ENCODE measurements at regions of chr3 and their contacts with region 1.

Region 1: DNA sequence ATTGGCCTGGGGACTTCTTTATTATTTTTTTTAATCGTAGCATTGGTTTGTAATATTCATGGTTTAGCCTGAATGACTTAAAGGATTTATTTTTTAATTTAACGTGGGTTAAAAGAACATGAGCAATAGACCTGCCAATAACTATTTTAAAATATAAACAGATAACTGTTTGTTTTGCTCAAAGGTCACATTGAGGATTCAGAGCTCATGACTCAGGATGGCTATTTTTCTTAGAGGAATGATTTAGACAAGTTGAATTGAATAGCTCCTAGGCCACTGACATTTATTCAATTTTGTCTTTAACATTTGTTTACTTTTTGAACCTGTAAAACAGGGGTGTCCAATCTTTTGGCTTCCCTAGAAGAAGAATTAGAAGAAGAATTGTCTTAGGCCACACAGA is 68.5 kb downstream of the ITPR1 start:
- DNase-seq: no peak
- ATAC-seq: no peak
- H3K4me3 Mint-ChIP-seq: no peak overlapping the region
- H3K27ac Mint-ChIP-seq: no peak overlapping the region
- H3K4me1 Mint-ChIP-seq: peaks cover 29% of the 10 kb centered on the region
- H3K27me3 Mint-ChIP-seq: no peaks in the 10 kb centered on the region
- CTCF ChIP-seq: no peak

Region 2: DNA sequence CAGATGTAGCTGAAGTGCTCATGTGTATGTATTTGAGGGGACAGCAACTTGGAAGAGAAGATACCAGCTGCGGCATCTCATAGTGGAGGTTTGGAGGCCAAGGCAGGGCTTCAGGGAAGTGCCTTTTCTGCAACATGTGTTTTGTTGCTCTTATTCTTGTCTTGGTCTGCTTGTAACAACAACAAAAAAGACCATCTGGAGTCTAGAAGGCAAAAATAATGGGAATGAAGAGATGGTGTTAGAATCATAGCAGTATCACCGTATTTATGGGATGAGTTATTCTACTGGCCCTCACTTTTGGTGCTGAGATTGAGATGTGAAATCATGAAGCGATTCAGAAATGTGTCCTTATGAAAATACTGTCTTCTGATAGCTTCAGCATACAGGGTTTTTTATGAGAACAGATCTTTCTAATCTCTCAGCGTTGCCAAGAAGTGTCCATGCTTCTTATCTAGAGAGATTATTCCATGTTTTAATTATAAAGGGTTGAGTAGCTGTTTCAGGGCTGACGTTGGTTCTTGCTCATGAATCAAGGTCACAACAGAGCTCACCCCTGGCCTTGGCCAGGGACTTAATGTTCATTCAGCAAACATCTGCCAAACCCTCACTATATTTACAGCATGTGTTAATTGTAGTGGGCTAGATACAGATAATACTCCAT is 10.5 kb before region 1 on chr3:
- CTCF ChIA-PET with region 1: no interaction called
- POLR2A ChIA-PET with region 1: no interaction called
- intact Hi-C with region 1: loop called (anchors 2 kb)
- DNase-seq: no peak
- ATAC-seq: no peak
- H3K4me3 Mint-ChIP-seq: no peak overlapping the region
- H3K27ac Mint-ChIP-seq: peak overlapping the region; percentile 60
- H3K4me1 Mint-ChIP-seq: peaks cover 59% of the 10 kb centered on the region
- H3K27me3 Mint-ChIP-seq: no peaks in the 10 kb centered on the region
- CTCF ChIP-seq: no peak

Region 3: GRCh38 chr3:4597204-4597985 is 35.7 kb after region 1 on chr3:
- CTCF ChIA-PET with region 1: no interaction called
- POLR2A ChIA-PET with region 1: no interaction called
- intact Hi-C with region 1: no loop called
- DNase-seq: no peak
- ATAC-seq: no peak
- H3K4me3 Mint-ChIP-seq: no peak overlapping the region
- H3K27ac Mint-ChIP-seq: peak overlapping the region; percentile 42
- H3K4me1 Mint-ChIP-seq: peaks cover 86% of the 10 kb centered on the region
- H3K27me3 Mint-ChIP-seq: no peaks in the 10 kb centered on the region
- CTCF ChIP-seq: no peak

Measured in activated B cell treated with CpG ODN at 0.5 μM for 24 hours (primary cell).